Sciatic nerve (tissue), 2 donors: ENCODE measurements at regions of chr5 and their contacts with region 1.

Region 1: DNA sequence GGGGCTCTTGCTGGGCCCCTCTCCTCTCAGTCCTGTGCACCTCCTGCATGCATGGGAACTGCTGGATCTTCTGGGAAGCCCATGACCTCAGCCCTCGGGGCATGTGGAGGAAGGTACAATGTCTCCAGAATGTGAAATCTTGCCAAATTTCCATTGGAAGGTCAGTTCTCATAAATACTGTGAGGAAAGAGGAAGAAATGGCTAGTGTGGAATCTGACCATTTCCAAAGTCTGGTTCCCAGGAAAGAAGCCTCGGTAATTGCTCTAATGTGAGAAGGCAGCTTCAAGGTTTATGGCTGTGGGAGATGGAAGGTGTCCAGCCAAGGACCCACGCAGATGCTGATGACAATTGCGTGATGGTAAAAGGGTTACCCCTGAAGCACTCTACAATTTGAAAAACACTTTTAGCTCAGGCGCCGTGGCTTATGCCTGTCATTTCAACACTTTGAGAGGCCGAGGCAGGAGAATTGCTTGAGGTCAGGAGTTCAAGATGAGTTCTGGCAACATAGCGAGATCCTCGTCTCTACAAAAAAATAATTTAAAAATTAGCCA is 8.1 kb upstream of the IL17B start:
- DNase-seq: no peak
- ATAC-seq: peak; percentile 55

Region 2: DNA sequence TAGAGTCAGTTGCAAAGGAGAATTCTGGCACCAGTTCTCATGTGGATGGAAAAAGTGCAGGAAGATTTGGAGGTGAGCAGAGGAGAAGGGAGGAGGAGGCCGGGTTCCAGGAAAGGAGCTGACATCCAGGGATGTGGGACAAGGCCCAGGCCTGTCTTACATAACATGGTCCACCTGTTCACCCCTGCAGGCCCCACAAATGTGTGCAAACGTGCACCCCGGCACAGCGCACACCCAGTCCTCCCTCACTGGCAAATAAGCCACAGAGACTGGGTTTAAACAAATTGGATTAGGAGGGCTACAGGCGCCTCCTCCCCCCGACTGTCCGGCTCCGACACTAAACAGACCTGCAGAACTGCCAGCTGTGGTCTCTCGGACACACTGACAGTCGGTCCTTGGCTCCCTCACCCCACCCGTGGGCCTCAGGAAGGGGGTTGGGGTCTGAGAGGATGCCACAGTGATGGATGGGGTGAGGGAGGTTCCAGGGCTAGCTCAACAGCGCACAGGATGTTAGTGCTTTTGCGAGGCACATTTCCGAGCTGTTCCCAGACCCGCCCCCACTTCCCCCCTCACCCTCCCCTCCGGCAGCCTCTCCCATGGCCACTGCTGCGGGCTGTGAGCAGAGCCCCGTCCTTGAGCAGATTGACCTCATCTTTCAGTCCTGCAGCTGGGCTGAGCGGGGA is 35.4 kb after region 1 on chr5:
- intact Hi-C with region 1: loop called (anchors 5 kb)
- DNase-seq: no peak
- ATAC-seq: peak; percentile 75